ENCODE measurements at regions of chr5 and their contacts with region 1.

Region 1: DNA sequence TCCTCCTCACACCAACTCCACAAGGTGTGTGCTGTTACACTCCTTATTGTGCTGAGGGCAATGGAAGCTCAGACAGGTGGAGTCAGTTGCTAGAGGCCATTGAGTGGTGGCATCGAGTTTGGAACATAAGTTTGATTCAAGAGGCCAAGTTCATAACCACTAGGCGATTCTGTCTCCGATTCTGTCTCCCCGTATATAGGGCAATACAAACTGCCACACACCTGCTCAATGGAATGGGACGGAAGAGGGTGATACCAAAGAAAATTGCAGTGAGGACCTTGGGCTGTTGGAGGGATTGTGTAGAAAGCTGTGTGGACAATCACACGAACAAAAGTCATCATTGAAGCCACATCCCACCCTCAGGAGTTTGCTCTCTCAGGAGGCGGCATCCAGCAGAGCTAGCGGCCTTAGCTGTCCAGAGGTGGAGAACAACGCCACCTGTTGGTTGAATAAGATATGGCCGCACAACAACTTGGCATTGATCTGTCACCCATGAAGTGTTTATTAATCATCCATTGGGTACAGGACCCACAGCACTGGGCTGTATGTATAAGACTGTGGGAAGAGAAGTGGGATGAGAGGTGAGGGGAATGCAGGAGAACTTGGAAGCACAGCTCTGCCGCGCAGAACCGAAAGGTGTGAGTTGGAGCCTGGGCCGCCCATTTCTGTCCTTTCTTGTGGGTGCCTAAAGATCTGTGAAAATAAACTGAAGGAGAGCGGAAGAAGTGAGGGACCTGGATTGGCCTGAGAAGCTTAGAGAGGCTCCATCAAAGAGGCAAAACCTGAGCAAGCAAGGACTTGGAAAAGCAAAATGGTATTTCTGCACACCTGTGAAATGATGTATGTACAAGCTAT is 16.1 kb upstream of the NEUROG1 start:
- DNase-seq: no peak
- H3K4me3 ChIP-seq: no peak overlapping the region
- CTCF ChIP-seq: peak; percentile 81

Region 2: DNA sequence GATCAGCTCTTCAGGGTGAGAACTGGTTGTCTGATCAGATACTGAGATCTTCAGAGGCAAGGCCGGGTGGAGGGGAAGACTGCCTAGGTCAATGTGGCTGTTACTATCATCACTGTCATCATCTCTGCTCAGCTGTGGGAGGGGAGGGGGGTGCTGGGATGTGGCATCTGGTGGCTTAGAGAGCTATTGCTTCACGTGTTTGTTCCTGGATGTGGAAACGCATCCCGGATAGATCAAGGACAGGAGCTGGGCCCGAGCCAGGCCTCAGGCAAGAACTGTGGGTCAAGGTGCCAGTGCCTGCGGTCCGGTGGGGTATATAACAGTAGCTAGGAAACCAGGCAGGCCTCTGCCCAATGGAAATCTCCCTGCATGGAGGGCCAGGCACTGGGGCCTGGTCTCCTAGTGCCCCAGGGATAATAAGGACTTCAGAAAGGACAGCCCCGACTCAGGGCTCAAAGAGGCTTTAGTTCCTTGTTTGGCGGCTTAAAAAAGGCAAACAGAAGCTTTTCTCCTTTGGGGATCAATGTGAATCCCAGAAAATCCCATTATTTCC is 69.4 kb before region 1 on chr5:
- CTCF ChIA-PET with region 1: interaction called, 2,422 read pairs
- POLR2A ChIA-PET with region 1: no interaction called
- DNase-seq: no peak
- H3K4me3 ChIP-seq: no peak overlapping the region
- CTCF ChIP-seq: no peak

Region 3: DNA sequence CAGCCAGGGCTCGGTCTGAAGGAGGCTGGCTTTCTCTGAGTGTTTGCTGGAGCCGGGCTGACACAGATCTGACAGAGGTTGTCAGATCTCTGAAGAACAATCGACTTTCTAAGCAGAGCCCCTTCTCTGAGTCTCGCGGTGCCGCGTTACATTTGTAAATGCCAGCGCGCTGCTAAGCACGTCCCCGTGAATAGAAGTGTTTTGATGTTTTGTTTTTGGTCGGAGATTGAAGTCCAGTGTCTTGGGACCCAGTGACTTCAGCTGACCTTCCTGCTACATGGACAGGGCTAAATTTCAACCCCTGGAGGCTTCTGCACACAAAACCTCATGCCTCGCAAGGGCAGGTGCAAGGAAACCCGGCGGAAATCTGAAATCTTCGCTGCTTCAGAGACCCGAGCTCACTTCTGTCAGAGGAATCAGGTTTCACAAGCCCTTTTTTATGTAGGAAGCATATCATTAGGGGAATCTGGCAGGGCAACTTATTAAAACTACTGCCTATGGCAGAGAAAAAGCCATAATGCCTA is 43.3 kb before region 1 on chr5:
- CTCF ChIA-PET with region 1: interaction called, 25 read pairs
- POLR2A ChIA-PET with region 1: no interaction called
- DNase-seq: no peak
- H3K4me3 ChIP-seq: no peak overlapping the region
- CTCF ChIP-seq: no peak

Region 4: DNA sequence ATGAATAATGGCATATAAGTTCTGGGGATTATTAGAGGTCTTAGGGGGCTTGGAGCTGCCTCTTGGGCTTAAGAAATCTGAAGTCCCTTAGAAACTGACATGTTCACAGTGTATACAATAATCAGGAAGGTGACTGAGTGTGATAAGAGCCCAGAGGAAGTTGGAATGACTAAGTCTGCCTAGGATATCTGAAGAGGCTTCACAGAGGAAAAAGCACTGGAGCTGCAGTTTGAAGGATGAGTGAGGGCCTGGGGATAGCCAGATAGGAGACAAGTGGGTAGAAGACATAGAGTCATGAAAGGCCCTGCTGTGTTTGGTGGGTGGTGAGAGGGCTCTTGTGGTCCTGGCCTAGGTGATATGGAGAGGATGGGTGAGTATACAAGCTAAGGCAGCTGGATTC is 24.9 kb before region 1 on chr5:
- CTCF ChIA-PET with region 1: interaction called, 39 read pairs
- POLR2A ChIA-PET with region 1: no interaction called
- DNase-seq: no peak
- H3K4me3 ChIP-seq: no peak overlapping the region
- CTCF ChIP-seq: no peak

Region 5: GRCh38 chr5:135729321-135729786 is 177.5 kb after region 1 on chr5:
- CTCF ChIA-PET with region 1: interaction called, 11 read pairs
- POLR2A ChIA-PET with region 1: no interaction called
- DNase-seq: no peak
- H3K4me3 ChIP-seq: no peak overlapping the region
- CTCF ChIP-seq: peak; percentile 6